ENCODE measurements at regions of chr14 and their contacts with region 1.

Region 1: DNA sequence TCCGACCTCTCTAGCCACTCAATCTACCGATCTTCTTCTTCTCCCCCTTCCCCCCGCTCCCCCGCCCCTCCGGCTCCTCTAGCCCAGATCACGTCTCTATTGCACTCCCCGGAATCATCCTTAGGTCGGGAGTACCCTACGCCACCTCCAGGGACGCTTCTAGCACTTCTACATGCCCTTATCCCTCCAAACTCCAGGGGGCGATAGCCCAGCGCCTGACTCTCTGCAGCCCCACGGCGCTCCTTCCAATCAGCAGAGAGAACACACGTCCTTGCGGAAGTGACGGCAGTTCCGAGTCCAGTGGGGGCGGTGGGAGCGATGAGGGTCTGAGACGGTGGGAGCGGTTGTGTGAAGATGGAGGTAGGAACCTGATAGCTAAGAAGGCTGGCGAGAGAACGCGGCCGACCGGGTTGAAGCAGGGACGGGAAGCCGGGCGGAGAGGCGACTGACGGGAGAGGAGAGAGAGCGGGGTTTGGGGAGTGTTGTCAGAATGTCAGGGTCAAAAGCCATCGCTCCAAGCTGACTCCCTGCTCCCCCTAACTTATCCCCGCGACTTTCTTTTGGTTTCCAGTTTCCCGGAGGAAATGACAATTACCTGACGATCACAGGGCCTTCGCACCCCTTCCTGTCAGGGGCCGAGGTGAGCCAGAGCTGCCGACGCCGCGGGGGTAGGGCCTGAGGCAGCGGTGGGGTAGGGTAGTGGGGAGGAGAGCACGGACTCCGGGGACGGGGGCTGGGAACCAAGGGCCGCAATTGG is at the starts of genes RAB2B and TOX4:
- DNase-seq: peak; percentile 90 to 99 (median 92)
- ATAC-seq: peak; percentile 96
- H3K4me3 ChIP-seq: peak within 1 kb of the TSS; percentile 99
- H3K4me3 Mint-ChIP-seq: peak within 1 kb of the TSS; percentile 99
- H3K27ac ChIP-seq: peak within 1 kb of the TSS; percentile 73 to 94
- H3K27ac Mint-ChIP-seq: peak within 1 kb of the TSS; percentile 94
- H3K4me1 ChIP-seq: peaks cover 20% of the 10 kb centered on the region
- H3K4me1 Mint-ChIP-seq: peaks cover 48% of the 10 kb centered on the region
- H3K27me3 ChIP-seq: no peaks in the 10 kb centered on the region
- H3K27me3 Mint-ChIP-seq: no peaks in the 10 kb centered on the region
- CTCF ChIP-seq: peak; percentile 95
- total RNA-seq, gene RAB2B: 21.1 to 23.9 TPM
- total RNA-seq, gene TOX4: 70.9 to 77.4 TPM

Region 2: GRCh38 chr14:21039585-21040369 is 437.3 kb before region 1 on chr14:
- CTCF ChIA-PET with region 1: no interaction called
- POLR2A ChIA-PET with region 1: no interaction called
- intact Hi-C with region 1: no loop called
- DNase-seq: peak in 6 of 14 experiments; percentile 10 to 73 (median 54)
- ATAC-seq: peak; percentile 73
- H3K4me3 ChIP-seq: no peak overlapping the region
- H3K4me3 Mint-ChIP-seq: no peak overlapping the region
- H3K27ac ChIP-seq: no peak overlapping the region
- H3K27ac Mint-ChIP-seq: no peak overlapping the region
- H3K4me1 ChIP-seq: peaks cover 13% of the 10 kb centered on the region
- H3K4me1 Mint-ChIP-seq: peaks cover 8% of the 10 kb centered on the region
- H3K27me3 ChIP-seq: peaks cover 0 to 3% of the 10 kb centered on the region in 2 experiments
- H3K27me3 Mint-ChIP-seq: peaks cover 10% of the 10 kb centered on the region
- CTCF ChIP-seq: peak; percentile 68

Region 3: GRCh38 chr14:21241218-21241819 is 235.8 kb before region 1 on chr14:
- CTCF ChIA-PET with region 1: no interaction called
- POLR2A ChIA-PET with region 1: interaction called, 3 read pairs
- intact Hi-C with region 1: loop called in 1 of 2 experiments (anchors 1 kb)
- DNase-seq: peak in 3 of 14 experiments; percentile 55 to 67 (median 63)
- ATAC-seq: no peak
- H3K4me3 ChIP-seq: no peak overlapping the region
- H3K4me3 Mint-ChIP-seq: no peak overlapping the region
- H3K27ac ChIP-seq: no peak overlapping the region
- H3K27ac Mint-ChIP-seq: peak overlapping the region; percentile 11
- H3K4me1 ChIP-seq: peaks cover 45% of the 10 kb centered on the region
- H3K4me1 Mint-ChIP-seq: peaks cover 75% of the 10 kb centered on the region
- H3K27me3 ChIP-seq: no peaks in the 10 kb centered on the region
- H3K27me3 Mint-ChIP-seq: no peaks in the 10 kb centered on the region
- CTCF ChIP-seq: peak; percentile 66

Region 4: DNA sequence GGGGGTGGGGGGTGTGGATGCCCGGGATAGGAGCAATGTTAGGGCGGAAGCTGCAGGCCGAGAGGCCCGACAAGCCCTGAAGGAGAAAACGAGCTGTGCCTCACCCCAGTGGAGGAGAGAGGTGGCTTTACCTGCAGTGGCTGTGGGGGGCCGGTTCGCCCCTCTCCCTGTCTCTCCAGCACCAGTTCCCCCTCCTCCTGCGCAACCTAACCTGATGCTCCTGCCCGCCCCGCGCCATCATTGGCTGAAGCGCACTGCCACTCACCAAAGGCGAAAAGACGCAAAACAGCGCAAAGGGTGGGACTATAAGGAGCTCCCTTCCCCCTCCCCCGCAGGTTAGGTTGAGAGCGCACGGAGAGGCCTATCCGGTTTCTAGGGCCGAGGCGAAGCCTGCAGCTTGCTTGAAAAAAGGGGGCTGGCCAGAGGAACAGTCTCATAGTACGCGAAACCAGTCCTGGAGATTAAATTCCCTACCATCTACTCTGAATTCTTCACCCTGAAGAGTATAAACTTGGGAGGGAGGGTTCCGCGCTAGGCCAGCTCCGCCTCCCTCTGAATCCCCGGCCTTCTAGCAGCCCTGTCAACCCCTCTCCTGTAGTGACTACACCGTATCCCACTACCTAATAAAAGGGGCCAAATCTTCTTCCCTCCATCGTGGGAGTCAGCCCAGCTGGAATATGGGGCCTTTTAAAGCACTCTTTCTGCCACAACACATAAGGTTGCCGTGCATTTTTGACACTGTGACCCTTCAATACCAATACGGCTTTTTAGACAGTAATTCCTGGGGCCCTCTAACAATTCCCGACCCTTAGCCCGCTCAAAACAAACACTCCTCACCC is 39.8 kb before region 1 on chr14:
- CTCF ChIA-PET with region 1: interaction called, 4 read pairs
- POLR2A ChIA-PET with region 1: interaction called, 43 read pairs
- intact Hi-C with region 1: loop called (anchors 1 to 2 kb)
- DNase-seq: peak; percentile 97 to 100 (median 99)
- ATAC-seq: peak; percentile 98
- H3K4me3 ChIP-seq: peak overlapping the region; percentile 84
- H3K4me3 Mint-ChIP-seq: peak overlapping the region; percentile 98
- H3K27ac ChIP-seq: peak overlapping the region; percentile 78 to 81
- H3K27ac Mint-ChIP-seq: peak overlapping the region; percentile 96
- H3K4me1 ChIP-seq: peaks cover 14% of the 10 kb centered on the region
- H3K4me1 Mint-ChIP-seq: peaks cover 81% of the 10 kb centered on the region
- H3K27me3 ChIP-seq: no peaks in the 10 kb centered on the region
- H3K27me3 Mint-ChIP-seq: no peaks in the 10 kb centered on the region
- CTCF ChIP-seq: no peak

Region 5: GRCh38 chr14:21510735-21511657 is 33.9 kb after region 1 on chr14 and contains the start of gene METTL3:
- CTCF ChIA-PET with region 1: interaction called, 18 read pairs
- POLR2A ChIA-PET with region 1: interaction called, 35 read pairs
- intact Hi-C with region 1: loop called (anchors 1 to 2 kb)
- DNase-seq: peak; percentile 88 to 98 (median 90)
- ATAC-seq: peak; percentile 99
- H3K4me3 ChIP-seq: peak within 1 kb of the TSS; percentile 83
- H3K4me3 Mint-ChIP-seq: peak within 1 kb of the TSS; percentile 98
- H3K27ac ChIP-seq: peak within 1 kb of the TSS; percentile 82 to 84
- H3K27ac Mint-ChIP-seq: peak within 1 kb of the TSS; percentile 98
- H3K4me1 ChIP-seq: peaks cover 30% of the 10 kb centered on the region
- H3K4me1 Mint-ChIP-seq: peaks cover 45% of the 10 kb centered on the region
- H3K27me3 ChIP-seq: no peaks in the 10 kb centered on the region
- H3K27me3 Mint-ChIP-seq: no peaks in the 10 kb centered on the region
- CTCF ChIP-seq: no peak
- total RNA-seq, gene METTL3: 31.9 to 34.5 TPM

Region 6: DNA sequence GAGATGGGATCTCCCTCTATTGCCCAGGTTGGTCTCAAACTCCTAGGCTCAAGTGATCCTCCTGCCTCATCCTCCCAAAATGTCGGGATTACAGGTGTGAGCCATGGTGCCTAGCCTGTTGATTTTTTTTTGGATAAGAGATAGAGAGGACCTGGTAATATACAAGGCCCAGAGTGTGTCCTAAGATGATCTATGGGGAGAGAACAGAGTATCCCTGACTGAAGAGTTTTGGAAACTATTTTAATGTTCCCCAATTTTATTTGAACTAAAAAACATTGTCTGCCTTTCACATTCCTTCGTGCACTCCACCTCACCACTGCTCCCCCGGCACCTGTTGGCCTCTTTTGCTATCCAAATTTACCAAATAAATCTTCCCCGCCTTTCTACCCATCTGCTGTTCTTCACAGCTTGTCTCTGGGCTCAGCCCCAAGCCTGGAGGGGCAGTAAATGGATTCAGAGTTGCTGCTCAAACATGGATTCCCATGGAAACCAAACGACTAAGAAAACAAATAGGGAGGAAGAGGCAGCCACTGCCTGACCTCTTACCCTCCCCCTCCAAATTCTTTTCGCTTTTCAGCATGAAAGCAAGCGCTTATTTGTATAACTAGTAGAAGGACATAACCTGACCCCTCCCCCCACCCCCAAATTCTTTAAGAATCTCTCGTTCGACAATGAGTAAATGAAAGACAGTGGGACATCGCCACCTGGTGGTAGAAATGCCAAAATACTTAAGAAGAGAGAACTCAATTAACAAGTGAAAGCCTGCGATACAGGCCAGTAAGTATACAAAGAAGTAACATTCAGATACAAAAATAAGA is 80.2 kb after region 1 on chr14:
- CTCF ChIA-PET with region 1: no interaction called
- POLR2A ChIA-PET with region 1: no interaction called
- intact Hi-C with region 1: loop called in 1 of 2 experiments (anchors 1 kb)
- DNase-seq: peak; percentile 40 to 91 (median 70)
- ATAC-seq: peak; percentile 70
- H3K4me3 ChIP-seq: peak overlapping the region; percentile 36
- H3K4me3 Mint-ChIP-seq: no peak overlapping the region
- H3K27ac ChIP-seq: no peak overlapping the region
- H3K27ac Mint-ChIP-seq: no peak overlapping the region
- H3K4me1 ChIP-seq: peaks cover 4% of the 10 kb centered on the region
- H3K4me1 Mint-ChIP-seq: peaks cover 6% of the 10 kb centered on the region
- H3K27me3 ChIP-seq: no peaks in the 10 kb centered on the region
- H3K27me3 Mint-ChIP-seq: no peaks in the 10 kb centered on the region
- CTCF ChIP-seq: peak; percentile 80